ENCODE measurements at regions of chr16 and their contacts with region 1.

Region 1: DNA sequence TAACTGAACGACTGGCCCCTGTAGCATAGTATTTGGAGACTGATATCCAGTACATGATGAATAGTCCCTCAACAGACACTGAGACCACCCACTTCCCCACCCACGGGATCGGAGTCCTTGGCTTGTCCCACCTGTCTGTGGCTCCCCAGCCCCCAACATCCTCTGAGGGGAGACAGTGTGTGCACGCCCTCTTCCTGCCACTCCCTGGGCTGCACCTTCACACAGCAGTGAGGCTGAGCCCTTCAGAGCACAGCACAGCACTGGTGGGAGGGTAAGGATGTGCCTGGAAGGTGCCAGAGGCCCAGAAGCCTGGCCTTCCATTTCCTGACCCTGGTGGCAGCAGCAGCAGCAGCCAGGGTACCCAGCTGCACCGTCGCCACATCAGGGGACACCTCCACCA is 11.0 kb downstream of the DNASE1 start:
- DNase-seq: peak; percentile 16
- H3K4me3 Mint-ChIP-seq: no peak overlapping the region
- H3K27ac Mint-ChIP-seq: peak overlapping the region; percentile 47
- H3K4me1 Mint-ChIP-seq: peaks cover 4% of the 10 kb centered on the region
- H3K27me3 Mint-ChIP-seq: no peaks in the 10 kb centered on the region

Region 2: DNA sequence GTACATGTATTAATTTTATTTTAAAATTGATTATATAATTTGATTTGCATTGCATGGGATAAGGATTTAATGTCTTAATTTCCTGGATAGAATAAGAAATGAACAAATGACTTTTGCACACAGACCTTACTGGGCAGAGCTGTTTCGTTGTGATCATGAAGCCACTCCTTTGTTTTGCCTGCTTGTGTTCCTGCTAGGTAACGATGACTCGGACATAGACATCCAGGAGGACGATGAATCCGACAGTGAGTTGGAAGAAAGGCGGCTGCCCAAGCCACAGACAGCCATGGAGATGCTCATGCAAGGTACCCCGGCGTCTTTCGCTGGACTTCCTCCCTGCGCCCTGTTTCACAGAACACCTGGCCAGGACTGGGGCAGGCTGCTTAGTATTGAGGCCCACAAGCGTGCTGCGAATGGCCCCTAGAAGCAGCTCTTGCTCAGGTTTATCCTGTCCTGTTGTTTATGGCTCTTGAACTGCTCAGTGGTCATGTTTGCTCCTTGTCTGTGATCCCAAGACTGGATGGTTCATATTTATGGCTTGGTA is 135.1 kb before region 1 on chr16:
- CTCF ChIA-PET with region 1: no interaction called
- intact Hi-C with region 1: loop called (anchors 5 kb)
- DNase-seq: no peak
- H3K4me3 Mint-ChIP-seq: no peak overlapping the region
- H3K27ac Mint-ChIP-seq: no peak overlapping the region
- H3K4me1 Mint-ChIP-seq: peaks cover 4% of the 10 kb centered on the region
- H3K27me3 Mint-ChIP-seq: no peaks in the 10 kb centered on the region

Region 3: DNA sequence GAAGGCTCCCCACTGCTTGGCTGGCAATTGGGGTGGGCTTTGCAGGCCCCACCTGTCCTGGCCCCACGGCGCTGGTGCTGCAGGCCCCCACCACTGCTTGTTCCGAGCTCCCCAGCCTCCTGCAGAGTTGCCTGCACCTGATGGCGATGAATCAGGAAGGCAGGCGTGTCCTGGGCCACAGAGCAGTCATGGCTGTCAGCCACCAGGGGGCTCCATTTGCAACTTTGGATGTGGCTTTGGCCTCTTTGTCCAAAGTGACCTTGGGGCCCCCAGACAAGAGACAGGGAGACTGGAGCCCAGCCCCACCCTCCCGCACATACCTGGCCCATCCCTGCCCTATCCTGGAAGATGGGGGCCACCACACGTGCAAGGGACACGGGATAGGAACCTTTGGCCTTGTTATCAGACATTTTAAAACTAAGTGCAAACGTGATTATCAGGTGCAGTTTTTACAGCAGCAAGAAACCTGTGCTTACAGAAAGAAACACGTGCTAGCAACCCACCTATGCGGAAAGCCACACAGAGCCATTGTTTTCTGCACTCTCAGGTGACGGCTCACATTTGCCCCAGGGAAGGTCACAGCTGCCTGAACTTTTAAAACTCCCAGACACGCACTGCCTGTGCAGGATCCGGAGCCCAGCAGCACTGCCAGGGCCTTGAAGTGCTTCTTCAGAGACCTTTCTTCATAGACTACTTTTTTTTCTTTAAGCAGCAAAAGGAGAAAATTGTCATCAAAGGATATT is 11.1 kb before region 1 on chr16 and contains the start of gene DNASE1:
- CTCF ChIA-PET with region 1: no interaction called
- intact Hi-C with region 1: no loop called
- DNase-seq: peak; percentile 74
- H3K4me3 Mint-ChIP-seq: no peak within 1 kb of the TSS
- H3K27ac Mint-ChIP-seq: no peak within 1 kb of the TSS
- H3K4me1 Mint-ChIP-seq: peaks cover 4% of the 10 kb centered on the region
- H3K27me3 Mint-ChIP-seq: no peaks in the 10 kb centered on the region
- total RNA-seq, gene DNASE1: 13.5 to 13.8 TPM